Thyroid gland (tissue), 4 donors: ENCODE measurements at regions of chrX and their contacts with region 1.

Region 1: DNA sequence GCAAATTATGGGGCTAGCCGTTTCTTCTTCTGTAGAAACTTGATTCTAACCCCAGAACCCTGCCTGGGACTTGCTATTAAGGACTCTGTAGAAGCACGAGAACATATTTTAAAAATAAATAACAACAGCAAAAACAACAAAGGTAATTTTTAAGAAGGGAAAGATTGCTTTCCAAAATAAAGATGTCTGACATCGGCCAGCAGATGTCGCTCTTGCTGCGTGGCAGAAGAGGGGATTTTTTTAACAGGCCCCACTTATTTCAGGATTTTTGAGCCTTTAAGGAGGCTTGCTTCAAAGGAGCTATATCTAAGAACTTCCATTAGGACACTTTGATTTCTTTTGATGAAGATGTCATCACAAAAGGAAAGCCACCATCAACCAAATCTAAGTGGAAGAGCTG is 62.8 kb upstream of the EGFL6 start:
- DNase-seq: peak; percentile 21 to 48
- H3K4me3 ChIP-seq: no peak overlapping the region
- H3K27ac ChIP-seq: no peak overlapping the region
- H3K4me1 ChIP-seq: no peaks in the 10 kb centered on the region
- H3K27me3 ChIP-seq: no peaks in the 10 kb centered on the region
- CTCF ChIP-seq: peak; percentile 36 to 71 (median 65)
- POLR2A ChIP-seq: no peak

Region 2: DNA sequence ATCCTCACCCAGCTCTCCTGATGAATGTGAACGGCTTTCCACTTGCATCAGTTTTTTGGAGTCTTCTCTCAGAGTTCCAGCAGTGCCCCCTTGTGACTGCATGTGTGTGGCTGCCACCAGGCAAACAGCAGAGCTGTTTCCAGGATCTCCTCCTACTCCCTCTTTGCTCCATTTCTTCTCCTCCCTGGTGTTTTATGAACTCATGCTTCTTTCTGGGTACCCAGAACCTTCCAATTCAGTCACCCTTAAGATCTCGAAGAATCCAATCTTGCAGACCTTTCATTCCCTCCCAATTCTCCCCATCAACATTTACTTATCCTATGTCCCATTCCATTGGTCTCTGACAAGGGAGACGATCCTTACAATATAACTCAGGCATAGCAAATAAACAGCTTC is 139.6 kb after region 1 on chrX:
- intact Hi-C with region 1: loop called (anchors 5 kb)
- DNase-seq: peak; percentile 50 to 57
- H3K4me3 ChIP-seq: no peak overlapping the region
- H3K27ac ChIP-seq: no peak overlapping the region
- H3K4me1 ChIP-seq: no peaks in the 10 kb centered on the region
- H3K27me3 ChIP-seq: no peaks in the 10 kb centered on the region
- CTCF ChIP-seq: peak in 4 of 6 experiments; percentile 39 to 48 (median 44)
- POLR2A ChIP-seq: no peak

Region 3: DNA sequence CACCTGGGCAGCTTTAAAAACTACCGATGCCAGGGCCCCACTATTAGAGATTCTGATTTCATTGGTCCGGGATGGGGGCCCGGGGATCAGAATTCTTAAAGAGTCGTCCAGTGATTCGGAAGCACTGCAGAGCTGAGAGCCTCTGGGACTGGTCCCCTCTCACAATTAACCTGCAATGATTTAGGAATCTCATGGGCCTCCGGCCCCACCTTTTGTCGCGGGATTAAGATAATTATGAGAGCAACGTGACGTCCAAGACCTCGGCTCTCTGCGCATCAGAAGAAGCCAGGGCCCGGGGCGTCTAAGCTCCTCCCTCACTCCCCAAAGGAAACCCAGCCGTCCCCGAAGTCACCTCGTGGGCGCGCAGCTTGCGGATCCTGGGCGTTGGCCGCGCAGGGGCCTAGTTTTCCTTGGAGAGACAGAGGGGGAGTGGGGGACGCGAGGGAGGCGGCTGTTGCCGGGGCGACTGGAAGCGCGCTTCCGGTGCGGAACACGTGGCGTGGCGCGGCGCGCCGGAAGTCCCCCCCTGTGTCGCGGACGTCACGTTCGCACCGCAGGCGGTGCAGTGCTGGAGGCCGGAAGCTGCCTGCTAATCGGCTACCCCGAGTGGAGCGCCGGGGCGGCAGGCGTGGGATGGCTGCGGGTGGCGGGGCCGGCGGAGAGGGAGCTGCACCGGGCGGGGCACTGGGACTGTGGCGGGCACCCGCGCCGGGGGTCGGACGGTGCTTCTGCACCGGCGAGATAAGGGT is 523.0 kb after region 1 on chrX and contains the start of gene GEMIN8:
- intact Hi-C with region 1: loop called (anchors 5 kb)
- DNase-seq: peak; percentile 83 to 84
- H3K4me3 ChIP-seq: peak within 1 kb of the TSS in 2 of 3 donors; percentile 44 to 46
- H3K27ac ChIP-seq: peak within 1 kb of the TSS; percentile 51 to 75 (median 61)
- H3K4me1 ChIP-seq: peaks cover 0 to 10% of the 10 kb centered on the region in 2 donors
- H3K27me3 ChIP-seq: no peaks in the 10 kb centered on the region
- CTCF ChIP-seq: no peak
- POLR2A ChIP-seq: peak in 1 of 2 donors; percentile 85
- total RNA-seq, gene GEMIN8: 13.9 to 50.7 (median 30.0) TPM